ENCODE measurements at regions of chr3 and their contacts with region 1.

Region 1: GRCh38 chr3:42590989-42591756 is 513 bp downstream of the SS18L2 start:
- DNase-seq: no peak
- ATAC-seq: no peak

Region 2: DNA sequence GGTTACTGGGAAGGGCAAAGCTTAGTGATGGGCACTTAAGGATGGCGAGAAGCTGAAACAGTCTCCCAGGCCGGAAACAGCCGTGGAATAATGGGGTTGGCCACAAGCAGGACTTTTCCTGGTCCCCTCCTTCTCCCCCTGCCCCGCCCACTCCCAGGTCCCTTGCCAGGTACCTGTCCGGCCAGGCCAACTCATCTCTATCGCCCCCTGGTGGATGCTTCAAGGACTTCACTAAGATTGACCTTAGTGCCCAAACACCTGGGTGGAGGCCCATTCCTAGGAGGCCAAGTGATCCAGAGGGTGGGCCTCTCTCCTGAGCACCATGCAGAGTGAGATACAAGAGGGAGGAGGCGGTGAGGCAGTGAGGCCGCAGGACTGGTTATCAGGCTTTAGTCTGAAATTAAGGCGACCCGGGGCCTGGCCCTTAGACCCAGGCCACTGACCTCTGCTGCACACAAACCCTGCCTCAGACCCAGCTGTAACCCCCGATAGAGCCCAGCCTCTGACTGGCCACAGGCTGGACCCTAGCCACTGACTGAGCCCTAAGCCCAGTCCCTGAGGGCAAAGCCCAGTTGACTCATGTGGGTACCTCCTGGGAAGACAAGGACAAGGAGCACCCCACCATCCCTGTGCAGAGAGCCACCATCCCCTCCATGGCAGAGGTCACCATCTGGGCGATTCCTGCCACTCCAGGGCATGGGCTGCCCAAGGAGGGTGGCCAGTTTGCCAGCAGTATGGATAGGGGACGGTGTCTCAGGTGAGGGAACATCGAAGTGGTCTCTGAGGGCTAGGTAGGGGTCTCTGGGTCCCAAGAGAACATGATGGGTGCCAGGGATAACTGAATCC is 51.1 kb before region 1 on chr3:
- intact Hi-C with region 1: no loop called
- DNase-seq: no peak
- ATAC-seq: peak; percentile 47

Region 3: GRCh38 chr3:42652611-42653302 is 61.6 kb after region 1 on chr3:
- intact Hi-C with region 1: loop called (anchors 10 kb)
- DNase-seq: peak; percentile 77
- ATAC-seq: peak; percentile 57